ENCODE measurements at regions of chr3 and their contacts with region 1.

Region 1: GRCh38 chr3:187215460-187215859 is 18.2 kb downstream of the RTP1 start:
- DNase-seq: no peak
- ATAC-seq: no peak
- H3K4me3 ChIP-seq: no peak overlapping the region
- H3K27ac ChIP-seq: no peak overlapping the region
- H3K4me1 ChIP-seq: peaks cover 8% of the 10 kb centered on the region
- H3K27me3 ChIP-seq: no peaks in the 10 kb centered on the region
- CTCF ChIP-seq: no peak
- POLR2A ChIP-seq: no peak

Region 2: DNA sequence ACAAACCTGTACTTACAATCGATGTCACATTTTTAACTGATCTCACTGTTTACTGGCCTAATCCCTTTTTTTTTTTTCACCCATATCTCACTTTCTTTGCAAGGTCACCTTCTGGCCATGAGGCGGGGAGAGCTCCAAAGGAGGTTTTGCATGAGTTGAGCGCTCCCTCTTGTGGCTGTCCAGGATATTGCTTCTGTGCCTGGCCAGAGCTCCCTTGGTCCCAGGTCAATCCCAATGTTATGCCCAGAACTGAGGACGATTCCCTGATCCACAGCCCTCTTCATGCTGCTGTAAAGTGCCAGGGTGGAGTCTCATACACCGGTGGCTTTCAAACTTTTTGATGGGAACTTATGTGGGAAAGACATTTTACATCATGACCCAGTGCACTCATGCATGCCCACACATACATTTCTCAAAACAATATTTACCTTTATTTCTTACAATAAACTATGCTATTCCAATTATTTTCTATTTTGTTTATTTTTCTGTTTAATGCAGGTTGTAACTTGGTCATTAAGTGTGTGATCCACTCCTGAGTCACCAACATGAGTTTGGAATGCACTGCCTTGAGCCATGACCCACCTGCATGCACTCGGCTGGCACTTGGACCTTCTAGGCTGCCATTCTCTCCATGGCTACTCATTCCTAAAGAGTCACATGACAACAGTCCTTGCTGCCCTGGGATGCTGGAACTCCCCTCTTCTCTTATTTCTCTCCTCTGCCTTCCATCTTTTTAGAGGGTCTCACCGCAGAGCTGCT is 464.4 kb after region 1 on chr3:
- intact Hi-C with region 1: loop called (anchors 5 kb)
- DNase-seq: peak; percentile 85 to 91 (median 88)
- ATAC-seq: peak; percentile 95
- H3K4me3 ChIP-seq: no peak overlapping the region
- H3K27ac ChIP-seq: no peak overlapping the region
- H3K4me1 ChIP-seq: peaks cover 8% of the 10 kb centered on the region
- H3K27me3 ChIP-seq: no peaks in the 10 kb centered on the region
- CTCF ChIP-seq: peak; percentile 75 to 99 (median 94)
- POLR2A ChIP-seq: no peak